Right ventricle myocardium inferior (tissue), 1 donor: ENCODE measurements at regions of chr4 and their contacts with region 1.

Region 1: DNA sequence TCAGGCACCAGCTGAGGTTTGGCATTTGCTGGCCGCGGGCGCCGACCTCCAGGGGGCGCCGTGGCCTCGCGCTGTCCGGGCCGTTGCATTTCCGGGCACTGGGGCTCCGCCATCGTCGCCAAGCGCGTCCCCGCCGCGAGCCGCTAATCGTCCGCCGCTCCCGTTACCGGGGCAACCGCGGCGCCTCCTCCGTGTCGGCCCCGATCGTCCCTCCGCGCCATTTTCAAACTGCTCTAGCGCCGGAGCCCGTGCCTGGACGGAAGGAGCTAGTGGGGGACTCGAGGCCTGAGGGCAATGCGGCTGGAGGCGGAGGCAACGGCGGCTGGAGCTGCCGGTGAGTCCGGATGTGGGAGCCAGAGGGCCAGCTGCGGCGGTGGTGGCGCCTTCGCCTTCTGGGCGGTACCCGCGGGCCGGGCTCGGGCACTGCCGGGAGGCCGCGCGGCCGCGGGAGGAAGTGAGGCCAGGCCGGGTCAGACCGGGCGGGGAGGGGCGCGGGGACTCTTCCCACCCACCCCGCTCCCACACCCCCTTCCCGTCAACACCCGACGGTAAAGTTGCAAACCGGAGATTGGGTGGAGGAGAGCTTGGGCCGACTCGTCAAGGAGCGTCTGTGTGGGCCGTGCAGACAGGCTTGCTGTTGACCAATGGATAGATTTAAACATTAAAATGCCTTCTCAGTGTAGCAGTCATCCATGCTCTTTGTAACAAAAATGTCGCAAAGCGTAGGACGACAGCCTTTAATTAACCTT is at the start of gene CEP135:
- DNase-seq: peak; percentile 96
- ATAC-seq: peak; percentile 98
- total RNA-seq, gene CEP135: 2.4 TPM

Region 2: DNA sequence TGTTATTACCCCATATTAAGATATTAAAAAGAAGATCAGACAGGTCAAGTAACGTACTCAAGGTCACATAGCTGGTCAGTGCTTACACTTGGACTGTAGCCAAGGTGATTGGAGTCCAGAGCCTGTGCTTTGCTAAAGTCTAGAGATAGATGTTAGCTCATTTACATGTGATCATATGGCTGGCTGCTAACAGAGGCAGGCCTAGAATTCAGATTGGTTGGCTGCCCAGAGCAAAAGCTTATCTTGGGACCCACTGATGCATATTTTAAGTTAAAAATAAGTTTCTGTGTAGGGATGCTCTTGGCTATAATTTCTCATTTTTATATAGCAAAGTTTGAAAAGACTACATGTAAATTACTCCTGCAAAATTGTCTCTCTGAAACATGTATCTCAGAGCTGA is 147.4 kb before region 1 on chr4:
- intact Hi-C with region 1: no loop called
- DNase-seq: no peak
- ATAC-seq: no peak

Region 3: DNA sequence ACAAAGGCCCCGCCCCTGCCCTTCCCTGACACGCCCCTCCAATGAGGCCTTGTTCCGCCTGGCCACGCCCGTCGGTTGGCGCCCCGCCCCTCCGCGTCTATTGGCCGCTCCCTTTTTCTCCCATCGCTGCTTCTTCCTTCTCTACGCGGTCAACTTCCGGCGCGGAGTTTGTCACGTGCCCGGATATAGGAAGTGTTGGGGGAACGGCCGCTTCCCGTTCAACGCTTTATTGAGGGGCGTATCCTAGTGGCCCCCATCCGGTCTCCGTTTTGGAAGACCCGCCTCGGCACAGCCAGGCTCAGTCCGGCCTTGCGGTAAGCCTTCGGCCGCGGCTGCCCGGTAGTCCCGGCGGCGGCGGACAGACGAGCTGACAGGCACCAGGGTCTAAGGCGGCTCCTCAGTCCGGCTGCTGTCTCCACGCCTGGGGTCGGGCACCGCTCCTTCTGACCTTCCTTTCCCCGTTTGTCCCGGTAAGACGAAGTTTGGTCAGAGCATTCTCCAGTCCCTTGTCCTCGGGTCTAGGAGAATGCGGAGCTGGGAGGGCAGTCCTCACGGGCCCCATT is 95.3 kb before region 1 on chr4 and contains the start of gene EXOC1:
- intact Hi-C with region 1: loop called (anchors 5 kb)
- DNase-seq: peak; percentile 100
- ATAC-seq: peak; percentile 99
- total RNA-seq, gene EXOC1: 19.8 TPM

Region 4: DNA sequence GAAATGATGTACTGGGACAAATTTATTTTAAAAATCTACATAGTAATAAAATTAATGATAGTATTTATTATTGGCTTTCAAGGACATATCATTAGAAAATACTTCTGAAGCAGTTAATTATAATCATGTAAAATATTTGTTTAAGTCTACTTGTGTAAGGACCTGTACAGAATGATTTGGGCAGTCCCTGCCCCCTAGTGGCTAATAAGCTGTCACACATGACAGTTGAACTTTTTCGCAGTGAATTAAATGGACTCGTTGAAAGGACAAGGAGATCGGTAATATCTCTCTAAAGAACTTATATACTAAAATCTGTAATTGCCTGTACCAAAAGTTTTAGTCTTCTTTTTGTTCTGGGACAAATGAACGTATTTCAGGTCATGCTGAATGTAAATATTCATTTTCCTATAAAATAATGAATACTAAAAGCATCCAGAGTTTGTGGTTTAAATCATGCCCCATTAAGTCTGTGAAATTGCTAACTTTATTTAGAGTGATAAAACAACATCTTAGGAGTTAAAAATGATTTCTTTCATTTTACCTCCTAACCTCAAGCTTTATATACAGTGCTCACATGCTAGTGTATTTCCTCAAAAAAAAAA is 81.8 kb before region 1 on chr4:
- intact Hi-C with region 1: no loop called
- DNase-seq: no peak
- ATAC-seq: peak; percentile 88

Region 5: GRCh38 chr4:56062603-56063031 is 113.7 kb after region 1 on chr4:
- intact Hi-C with region 1: no loop called
- DNase-seq: no peak
- ATAC-seq: no peak

Region 6: GRCh38 chr4:56301181-56302076 is 352.5 kb after region 1 on chr4:
- intact Hi-C with region 1: loop called (anchors 5 kb)
- DNase-seq: peak; percentile 66
- ATAC-seq: peak; percentile 92

Region 7: GRCh38 chr4:56843421-56843899 is 894.6 kb after region 1 on chr4:
- intact Hi-C with region 1: loop called (anchors 5 kb)
- DNase-seq: no peak
- ATAC-seq: no peak